ENCODE measurements at regions of chr12 and their contacts with region 1.

Region 1: DNA sequence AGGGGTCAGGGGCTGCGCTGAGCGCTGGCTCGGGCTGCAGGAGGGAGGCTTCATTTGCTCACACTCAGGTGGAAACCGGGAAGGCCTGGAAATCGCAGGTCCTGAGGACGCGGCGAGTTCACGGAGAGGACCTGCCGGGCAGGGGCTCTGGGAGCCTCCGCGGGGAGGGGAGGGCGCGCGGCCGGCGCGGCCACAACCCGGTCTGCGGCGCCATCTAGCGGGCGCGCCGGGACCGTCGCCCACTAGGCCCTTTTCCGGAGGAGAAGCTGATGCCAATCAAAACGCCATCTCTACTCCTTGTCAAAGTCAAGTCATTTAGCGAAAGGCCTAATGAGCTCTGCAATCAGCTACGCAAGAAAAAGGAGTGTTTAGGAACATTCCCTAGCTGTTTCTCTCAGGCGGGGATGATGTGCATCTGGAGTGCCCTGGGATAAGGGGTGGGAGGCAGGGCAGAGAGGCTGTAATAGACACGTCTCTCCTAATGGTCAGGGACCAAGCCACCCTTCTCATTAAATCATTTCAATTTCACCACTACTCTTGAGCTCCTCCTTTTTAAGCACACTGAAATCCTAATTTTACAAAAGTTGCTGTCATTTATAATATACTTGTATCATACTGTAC is 885.8 kb upstream of the TMEM132C start:
- DNase-seq: peak; percentile 6 to 30
- ATAC-seq: peak in 5 of 8 donors; percentile 42 to 76 (median 54)
- H3K4me3 ChIP-seq: peak overlapping the region in 3 of 10 donors; percentile 19 to 24 (median 21)
- H3K27ac ChIP-seq: no peak overlapping the region
- H3K4me1 ChIP-seq: peaks cover 0 to 6% (median 0%) of the 10 kb centered on the region in 9 donors
- H3K27me3 ChIP-seq: peaks cover 0 to 23% (median 12%) of the 10 kb centered on the region in 7 donors
- CTCF ChIP-seq: peak; percentile 70 to 88 (median 84)

Region 2: DNA sequence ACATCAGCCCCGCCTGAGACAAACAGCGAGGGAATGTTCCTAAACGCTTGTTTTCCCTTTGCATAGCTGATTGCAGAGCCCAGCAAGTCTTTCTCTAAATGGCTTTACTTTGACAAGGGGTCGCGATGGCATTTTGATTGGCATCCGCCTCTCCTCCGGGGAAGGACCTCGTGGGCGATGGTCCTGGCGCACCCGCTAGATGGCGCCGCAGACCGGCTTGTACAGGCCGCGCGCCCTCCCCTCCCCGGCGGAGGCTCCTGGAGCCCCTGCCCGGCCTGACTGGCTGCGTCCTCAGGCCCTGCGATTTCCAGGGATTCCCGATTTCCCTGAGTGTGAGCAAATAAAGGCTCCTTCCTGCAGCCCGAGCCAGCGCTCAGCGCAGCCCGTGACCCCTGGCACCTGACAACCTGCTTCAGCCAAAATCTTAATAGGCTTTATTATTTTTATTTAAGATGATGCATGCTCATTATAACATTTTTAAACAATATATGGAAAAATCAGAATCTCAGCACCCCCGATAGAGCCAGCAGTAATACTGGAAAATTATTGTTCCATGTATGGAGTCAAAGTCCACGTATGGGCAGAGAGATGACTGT is 1847.6 kb before region 1 on chr12:
- intact Hi-C with region 1: loop called in 1 of 10 experiments (anchors 10 kb)
- DNase-seq: peak; percentile 5 to 19
- ATAC-seq: peak in 4 of 8 donors; percentile 38 to 86 (median 54)
- H3K4me3 ChIP-seq: no peak overlapping the region
- H3K27ac ChIP-seq: no peak overlapping the region
- H3K4me1 ChIP-seq: no peaks in the 10 kb centered on the region
- H3K27me3 ChIP-seq: peaks cover 0 to 52% (median 25%) of the 10 kb centered on the region in 7 donors
- CTCF ChIP-seq: peak; percentile 21 to 75 (median 67)

Region 3: DNA sequence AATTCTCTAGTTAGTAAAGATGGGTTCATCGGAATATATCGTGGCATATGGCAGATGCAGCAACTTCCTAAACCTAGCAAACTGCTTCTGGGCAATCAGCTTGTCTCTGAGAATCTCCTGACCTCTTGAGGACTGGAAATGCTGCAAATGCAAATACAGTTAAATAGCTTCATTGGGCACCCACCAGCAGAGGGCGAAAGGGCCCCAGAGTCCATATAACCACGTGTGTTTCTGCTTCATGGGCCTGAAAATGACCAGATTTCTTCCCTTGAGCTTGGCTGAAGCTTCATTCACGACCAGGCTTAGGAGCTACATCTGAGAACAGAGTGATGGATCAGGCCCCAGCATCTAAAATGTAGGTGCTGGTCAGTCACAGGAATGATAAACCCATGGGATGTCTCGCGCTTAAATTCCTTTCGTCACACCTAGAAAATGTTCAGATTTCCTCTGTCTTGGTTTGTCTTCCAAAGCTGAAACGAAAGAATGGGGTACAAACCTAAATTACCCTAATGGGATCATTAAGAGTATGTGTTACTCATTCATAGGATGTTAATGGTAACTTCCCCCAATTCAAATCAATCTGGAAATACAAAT is 596.7 kb before region 1 on chr12:
- intact Hi-C with region 1: loop called in 2 of 10 experiments (anchors 5 to 10 kb)
- DNase-seq: peak; percentile 13
- ATAC-seq: peak in 1 of 8 donors; percentile 51
- H3K4me3 ChIP-seq: no peak overlapping the region
- H3K27ac ChIP-seq: no peak overlapping the region
- H3K4me1 ChIP-seq: no peaks in the 10 kb centered on the region
- H3K27me3 ChIP-seq: peaks cover 0 to 7% (median 0%) of the 10 kb centered on the region in 7 donors
- CTCF ChIP-seq: peak; percentile 14 to 62 (median 46)

Region 4: GRCh38 chr12:127343940-127344339 is 37.2 kb before region 1 on chr12:
- intact Hi-C with region 1: no loop called
- DNase-seq: no peak
- ATAC-seq: no peak
- H3K4me3 ChIP-seq: no peak overlapping the region
- H3K27ac ChIP-seq: no peak overlapping the region
- H3K4me1 ChIP-seq: no peaks in the 10 kb centered on the region
- H3K27me3 ChIP-seq: peaks cover 0 to 13% (median 0%) of the 10 kb centered on the region in 7 donors
- CTCF ChIP-seq: no peak

Measured in heart right ventricle (tissue), 16 donors.